Activated CD4-positive, alpha-beta T cell treated with anti-CD3 and anti-CD28 coated beads, Interleukin-2, amount 10 ng/mL, durations not matched to agents 7 days and 5 days (primary cell): ENCODE measurements at regions of chr7 and their contacts with region 1.

Region 1: DNA sequence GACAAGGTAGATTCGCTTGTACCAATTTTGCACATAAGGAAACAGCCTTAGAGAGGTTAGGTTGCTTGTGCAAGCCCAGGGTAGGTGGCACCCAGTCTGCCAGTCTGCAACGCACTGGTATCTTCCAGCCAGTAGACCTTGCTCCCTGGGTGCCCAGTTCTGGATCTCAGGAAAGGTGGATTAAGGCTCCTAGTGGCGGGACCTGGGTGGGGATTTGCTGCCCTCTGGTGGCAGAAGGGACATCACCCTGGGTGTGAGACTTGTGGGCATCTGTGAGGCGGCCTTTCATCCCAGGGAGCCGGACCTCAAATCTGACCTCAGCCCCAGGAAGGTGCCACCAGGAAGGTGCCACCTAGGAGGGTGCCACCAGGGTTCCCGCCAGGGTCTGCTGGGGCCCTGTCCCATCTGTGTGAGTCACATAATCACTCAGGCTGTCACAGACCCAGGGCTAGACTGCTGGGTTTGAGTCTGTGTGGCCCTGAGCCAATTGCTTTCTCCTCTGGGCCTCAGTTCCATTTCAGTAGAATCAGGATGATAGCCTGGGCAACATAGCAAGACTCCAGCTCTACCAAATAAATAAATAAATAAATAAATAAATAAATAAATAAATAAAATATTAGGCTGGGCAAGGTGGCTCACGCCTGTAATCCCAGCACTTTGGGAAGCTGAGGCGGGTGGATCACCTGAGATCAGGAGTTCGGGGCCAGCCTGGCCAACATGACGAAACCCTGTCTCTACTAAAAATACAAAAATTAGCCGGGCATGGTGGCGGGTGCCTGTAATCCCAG is 5.3 kb upstream of the PRKRIP1 start:
- DNase-seq: peak; percentile 72
- H3K4me3 Mint-ChIP-seq: no peak overlapping the region
- H3K27ac Mint-ChIP-seq: no peak overlapping the region
- H3K4me1 Mint-ChIP-seq: peaks cover 6% of the 10 kb centered on the region
- H3K27me3 Mint-ChIP-seq: no peaks in the 10 kb centered on the region

Region 2: GRCh38 chr7:102125127-102125561 is 265.7 kb before region 1 on chr7:
- CTCF ChIA-PET with region 1: no interaction called
- POLR2A ChIA-PET with region 1: no interaction called
- DNase-seq: no peak
- H3K4me3 Mint-ChIP-seq: no peak overlapping the region
- H3K27ac Mint-ChIP-seq: peak overlapping the region; percentile 46
- H3K4me1 Mint-ChIP-seq: peaks cover 13% of the 10 kb centered on the region
- H3K27me3 Mint-ChIP-seq: no peaks in the 10 kb centered on the region

Region 3: GRCh38 chr7:102279537-102280400 is 111.1 kb before region 1 on chr7:
- CTCF ChIA-PET with region 1: interaction called, 15 read pairs
- POLR2A ChIA-PET with region 1: no interaction called
- DNase-seq: peak; percentile 65
- H3K4me3 Mint-ChIP-seq: no peak overlapping the region
- H3K27ac Mint-ChIP-seq: no peak overlapping the region
- H3K4me1 Mint-ChIP-seq: peaks cover 7% of the 10 kb centered on the region
- H3K27me3 Mint-ChIP-seq: peaks cover 4% of the 10 kb centered on the region

Region 4: DNA sequence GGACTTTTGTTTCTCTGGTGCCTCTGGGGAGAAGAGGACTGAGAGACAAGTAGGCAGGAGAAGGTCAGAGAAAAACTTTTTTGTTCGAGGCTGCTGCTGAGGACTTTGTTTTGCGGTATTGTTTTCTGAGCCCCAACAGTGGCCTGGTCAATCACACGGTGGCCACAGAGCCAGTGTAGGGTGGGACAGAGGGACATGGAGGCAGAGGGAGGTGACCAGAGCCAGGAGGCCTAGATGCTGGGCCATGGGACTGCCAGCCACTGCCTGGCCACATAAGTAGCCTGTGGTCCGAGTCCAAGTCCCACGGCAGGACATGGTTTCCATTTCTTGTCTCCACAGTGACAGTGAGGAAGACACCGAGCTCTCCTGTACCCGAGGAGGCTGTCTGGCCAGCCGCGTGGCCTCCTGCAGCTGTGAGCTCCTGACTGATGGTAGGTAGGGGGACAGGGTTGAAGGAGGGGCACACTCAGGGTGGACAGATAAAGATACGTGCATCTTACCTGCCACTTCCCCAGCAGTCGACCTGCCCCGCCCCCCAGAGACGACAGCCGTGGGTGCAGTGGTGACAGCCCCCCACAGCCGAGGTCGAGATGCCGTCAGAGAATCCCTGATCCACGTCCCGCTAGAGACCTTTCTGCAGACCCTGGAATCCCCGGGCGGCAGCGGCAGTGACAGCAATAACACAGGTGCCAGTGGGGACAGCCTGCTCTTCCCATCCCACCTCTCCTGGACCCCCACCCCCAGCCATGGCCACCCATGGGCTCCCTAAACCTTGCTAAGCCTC is 76.7 kb before region 1 on chr7:
- CTCF ChIA-PET with region 1: no interaction called
- POLR2A ChIA-PET with region 1: no interaction called
- DNase-seq: no peak
- H3K4me3 Mint-ChIP-seq: no peak overlapping the region
- H3K27ac Mint-ChIP-seq: no peak overlapping the region
- H3K4me1 Mint-ChIP-seq: no peaks in the 10 kb centered on the region
- H3K27me3 Mint-ChIP-seq: no peaks in the 10 kb centered on the region